Heart left ventricle (tissue), 16 donors: ENCODE measurements at regions of chr14 and their contacts with region 1.

Region 1: GRCh38 chr14:80055667-80056496 is 155.4 kb downstream of the DIO2 start:
- DNase-seq: peak in 1 of 5 donors; percentile 27
- ATAC-seq: peak in 3 of 4 donors; percentile 45 to 55 (median 54)
- H3K4me3 ChIP-seq: no peak overlapping the region
- H3K27ac ChIP-seq: peak overlapping the region in 1 of 12 donors; percentile 16
- H3K4me1 ChIP-seq: peaks cover 0 to 5% (median 0%) of the 10 kb centered on the region in 12 donors
- H3K27me3 ChIP-seq: no peaks in the 10 kb centered on the region
- CTCF ChIP-seq: peak; percentile 24 to 72 (median 52)
- POLR2A ChIP-seq: no peak

Region 2: DNA sequence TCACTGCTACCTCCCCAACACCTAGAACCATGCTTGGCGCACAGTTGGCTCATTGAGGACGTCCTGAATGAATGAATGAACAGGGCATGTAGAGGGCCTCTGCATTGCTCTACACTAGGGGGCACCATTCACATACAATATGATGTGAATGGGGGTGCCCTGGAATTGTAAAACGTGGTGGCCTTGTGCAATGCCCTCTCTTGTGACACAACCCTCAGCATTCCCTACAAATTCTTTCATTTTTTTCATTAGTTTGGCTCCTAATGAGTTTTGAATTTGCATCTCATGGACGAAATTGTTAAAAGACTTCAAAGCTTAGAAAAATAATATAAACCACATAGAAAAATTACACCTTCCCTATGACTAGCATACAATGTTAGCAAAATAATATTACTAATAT is 157.7 kb after region 1 on chr14:
- intact Hi-C with region 1: loop called in 1 of 10 experiments (anchors 5 kb)
- DNase-seq: peak in 2 of 5 donors; percentile 24 to 32
- ATAC-seq: peak in 1 of 4 donors; percentile 41
- H3K4me3 ChIP-seq: no peak overlapping the region
- H3K27ac ChIP-seq: no peak overlapping the region
- H3K4me1 ChIP-seq: peaks cover 0 to 16% (median 0%) of the 10 kb centered on the region in 12 donors
- H3K27me3 ChIP-seq: no peaks in the 10 kb centered on the region
- CTCF ChIP-seq: peak in 8 of 12 donors; percentile 8 to 29 (median 12)
- POLR2A ChIP-seq: no peak

Region 3: DNA sequence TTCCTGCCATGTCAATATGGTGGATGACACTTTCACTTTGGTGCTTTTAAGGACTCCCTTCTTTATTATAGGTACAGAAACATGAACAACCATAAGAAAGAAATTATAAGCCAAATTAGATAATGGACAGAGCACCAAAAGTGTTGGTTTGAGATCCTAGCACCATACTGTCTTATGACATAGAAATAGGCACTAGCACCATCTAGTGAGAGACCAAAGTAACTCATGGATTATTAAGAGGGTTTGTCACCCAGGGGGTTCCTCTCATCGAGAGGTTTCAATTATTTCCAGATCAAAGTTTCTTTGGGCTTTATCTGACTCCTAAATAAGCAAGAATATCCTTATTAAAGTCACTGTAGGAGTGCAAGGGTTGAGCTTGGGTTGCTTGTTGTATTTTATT is 308.4 kb after region 1 on chr14:
- intact Hi-C with region 1: loop called in 1 of 10 experiments (anchors 10 kb)
- DNase-seq: no peak
- ATAC-seq: peak in 1 of 4 donors; percentile 51
- H3K4me3 ChIP-seq: no peak overlapping the region
- H3K27ac ChIP-seq: no peak overlapping the region
- H3K4me1 ChIP-seq: no peaks in the 10 kb centered on the region
- H3K27me3 ChIP-seq: no peaks in the 10 kb centered on the region
- CTCF ChIP-seq: peak in 6 of 12 donors; percentile 8 to 33 (median 22)
- POLR2A ChIP-seq: no peak

Region 4: GRCh38 chr14:80587075-80587724 is 531.3 kb after region 1 on chr14:
- intact Hi-C with region 1: loop called in 1 of 10 experiments (anchors 5 kb)
- DNase-seq: no peak
- ATAC-seq: no peak
- H3K4me3 ChIP-seq: no peak overlapping the region
- H3K27ac ChIP-seq: no peak overlapping the region
- H3K4me1 ChIP-seq: peaks cover 0 to 18% (median 0%) of the 10 kb centered on the region in 12 donors
- H3K27me3 ChIP-seq: no peaks in the 10 kb centered on the region
- CTCF ChIP-seq: peak in 10 of 12 donors; percentile 11 to 52 (median 28)
- POLR2A ChIP-seq: no peak

Region 5: GRCh38 chr14:80850197-80850814 is 794.4 kb after region 1 on chr14:
- intact Hi-C with region 1: loop called in 9 of 10 experiments (anchors 5 to 10 kb)
- DNase-seq: no peak
- ATAC-seq: no peak
- H3K4me3 ChIP-seq: no peak overlapping the region
- H3K27ac ChIP-seq: no peak overlapping the region
- H3K4me1 ChIP-seq: peaks cover 0 to 5% (median 0%) of the 10 kb centered on the region in 12 donors
- H3K27me3 ChIP-seq: no peaks in the 10 kb centered on the region
- CTCF ChIP-seq: peak; percentile 42 to 71 (median 58)
- POLR2A ChIP-seq: no peak